ENCODE measurements at regions of chr7 and their contacts with region 1.

Region 1: GRCh38 chr7:134165252-134165651 is 38.1 kb downstream of the LRGUK start:
- DNase-seq: no peak
- H3K4me3 ChIP-seq: no peak overlapping the region
- H3K27ac ChIP-seq: no peak overlapping the region
- H3K4me1 ChIP-seq: no peaks in the 10 kb centered on the region
- H3K27me3 ChIP-seq: no peaks in the 10 kb centered on the region
- CTCF ChIP-seq: no peak

Region 2: GRCh38 chr7:133846203-133846945 is 318.9 kb before region 1 on chr7:
- CTCF ChIA-PET with region 1: no interaction called
- POLR2A ChIA-PET with region 1: no interaction called
- intact Hi-C with region 1: no loop called
- DNase-seq: no peak
- H3K4me3 ChIP-seq: no peak overlapping the region
- H3K27ac ChIP-seq: no peak overlapping the region
- H3K4me1 ChIP-seq: no peaks in the 10 kb centered on the region
- H3K27me3 ChIP-seq: no peaks in the 10 kb centered on the region
- CTCF ChIP-seq: no peak

Region 3: GRCh38 chr7:134316539-134317344 is 151.5 kb after region 1 on chr7 and contains the start of gene SLC35B4:
- CTCF ChIA-PET with region 1: no interaction called
- POLR2A ChIA-PET with region 1: no interaction called
- intact Hi-C with region 1: no loop called
- DNase-seq: peak; percentile 99
- H3K4me3 ChIP-seq: peak within 1 kb of the TSS; percentile 98
- H3K27ac ChIP-seq: peak within 1 kb of the TSS; percentile 89
- H3K4me1 ChIP-seq: no peaks in the 10 kb centered on the region
- H3K27me3 ChIP-seq: no peaks in the 10 kb centered on the region
- CTCF ChIP-seq: no peak
- total RNA-seq, gene SLC35B4: 20.0 and 22.1 TPM in 2 replicates

Region 4: DNA sequence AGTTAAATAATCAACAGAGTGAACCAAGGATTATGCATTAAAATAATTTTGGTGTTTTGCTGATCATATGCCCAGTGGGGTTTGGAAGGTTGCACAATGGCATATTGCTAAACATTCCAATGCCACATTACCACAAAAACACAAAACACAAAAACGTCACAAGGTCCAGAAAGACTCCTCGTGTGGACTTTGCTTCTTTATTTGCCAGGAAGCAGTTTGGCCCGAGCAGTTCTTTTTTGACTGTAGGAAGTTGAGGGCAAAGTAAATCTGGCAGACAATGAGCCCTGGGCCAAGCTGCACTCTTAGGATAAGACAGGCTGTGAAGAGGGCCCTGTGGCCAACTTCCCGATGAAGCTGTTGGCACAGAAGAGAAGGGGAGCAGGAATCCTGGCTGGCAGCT is 190.7 kb after region 1 on chr7:
- CTCF ChIA-PET with region 1: no interaction called
- POLR2A ChIA-PET with region 1: no interaction called
- intact Hi-C with region 1: loop called (anchors 10 kb)
- DNase-seq: no peak
- H3K4me3 ChIP-seq: no peak overlapping the region
- H3K27ac ChIP-seq: no peak overlapping the region
- H3K4me1 ChIP-seq: no peaks in the 10 kb centered on the region
- H3K27me3 ChIP-seq: peaks cover 12% of the 10 kb centered on the region
- CTCF ChIP-seq: no peak

Measured in A673 (cell line).